Naive thymus-derived CD4-positive, alpha-beta T cell (primary cell): ENCODE measurements at regions of chr14 and their contacts with region 1.

Region 1: GRCh38 chr14:20454516-20455354 is at the starts of genes APEX1 and OSGEP:
- DNase-seq: peak; percentile 86 to 99 (median 98)
- ATAC-seq: peak; percentile 88
- H3K4me3 ChIP-seq: peak within 1 kb of the TSS; percentile 80
- H3K4me3 Mint-ChIP-seq: peak within 1 kb of the TSS in 6 of 10 donors; percentile 7 to 43 (median 30)
- H3K27ac ChIP-seq: peak within 1 kb of the TSS; percentile 85
- H3K27ac Mint-ChIP-seq: no peak within 1 kb of the TSS
- H3K4me1 ChIP-seq: peaks cover 13 to 18% of the 10 kb centered on the region in 2 donors
- H3K4me1 Mint-ChIP-seq: peaks cover 12 to 30% (median 19%) of the 10 kb centered on the region in 7 donors
- H3K27me3 ChIP-seq: no peaks in the 10 kb centered on the region
- H3K27me3 Mint-ChIP-seq: no peaks in the 10 kb centered on the region
- total RNA-seq, gene APEX1: 97.4 to 159 (median 129) TPM
- total RNA-seq, gene OSGEP: 54.2 to 77.2 (median 69.1) TPM

Region 2: DNA sequence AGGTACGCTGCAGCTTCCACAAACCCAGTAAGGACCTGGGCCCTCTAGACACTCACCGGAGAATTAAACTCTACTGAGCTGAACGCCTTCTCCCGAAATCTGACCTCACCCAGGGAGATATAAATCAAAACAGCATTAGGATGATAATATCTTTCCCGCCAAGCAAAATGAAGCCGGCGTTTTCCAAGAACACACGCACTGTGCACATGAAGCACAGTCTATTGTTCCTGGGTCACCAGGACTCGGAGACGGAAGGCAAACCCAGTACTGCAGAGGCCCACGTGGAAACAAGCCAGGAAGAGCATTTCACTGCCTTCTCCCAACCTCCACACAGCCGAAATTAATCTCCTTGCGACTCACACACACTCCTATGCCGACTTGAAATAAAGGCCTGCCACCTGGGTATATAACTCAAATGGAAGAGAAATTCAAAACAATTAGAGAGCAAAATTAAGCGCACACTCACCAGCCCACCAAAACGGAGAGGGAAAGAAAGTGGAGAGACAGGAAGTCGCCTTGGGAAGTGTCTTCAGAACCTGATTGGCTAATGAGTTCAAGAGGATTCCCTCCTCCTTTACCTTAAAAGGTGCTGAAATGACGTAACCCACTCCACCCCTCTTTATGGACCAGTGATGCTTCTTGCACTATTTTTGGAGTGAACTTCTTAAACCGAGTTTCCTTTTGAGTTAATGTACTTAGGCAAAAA is 121.8 kb before region 1 on chr14 and contains the start of gene CCNB1IP1:
- CTCF ChIA-PET with region 1: interaction called, 5 read pairs
- POLR2A ChIA-PET with region 1: interaction called, 3 read pairs
- intact Hi-C with region 1: loop called in 1 of 2 experiments (anchors 2 kb)
- DNase-seq: peak; percentile 11 to 80 (median 64)
- ATAC-seq: peak; percentile 99
- H3K4me3 ChIP-seq: peak within 1 kb of the TSS; percentile 97
- H3K4me3 Mint-ChIP-seq: peak within 1 kb of the TSS; percentile 85 to 100 (median 96)
- H3K27ac ChIP-seq: peak within 1 kb of the TSS; percentile 62
- H3K27ac Mint-ChIP-seq: peak within 1 kb of the TSS; percentile 67 to 96 (median 92)
- H3K4me1 ChIP-seq: no peaks in the 10 kb centered on the region
- H3K4me1 Mint-ChIP-seq: peaks cover 12 to 49% (median 34%) of the 10 kb centered on the region in 7 donors
- H3K27me3 ChIP-seq: no peaks in the 10 kb centered on the region
- H3K27me3 Mint-ChIP-seq: peaks cover 0 to 4% (median 0%) of the 10 kb centered on the region in 5 donors
- total RNA-seq, gene CCNB1IP1: 19.1 to 29.8 (median 28.7) TPM

Region 3: GRCh38 chr14:20356422-20356821 is 98.3 kb before region 1 on chr14:
- CTCF ChIA-PET with region 1: no interaction called
- POLR2A ChIA-PET with region 1: no interaction called
- intact Hi-C with region 1: no loop called
- DNase-seq: no peak
- ATAC-seq: no peak
- H3K4me3 ChIP-seq: no peak overlapping the region
- H3K4me3 Mint-ChIP-seq: no peak overlapping the region
- H3K27ac ChIP-seq: no peak overlapping the region
- H3K27ac Mint-ChIP-seq: peak overlapping the region in 1 of 9 donors; percentile 28
- H3K4me1 ChIP-seq: no peaks in the 10 kb centered on the region
- H3K4me1 Mint-ChIP-seq: peaks cover 0 to 5% (median 0%) of the 10 kb centered on the region in 7 donors
- H3K27me3 ChIP-seq: no peaks in the 10 kb centered on the region
- H3K27me3 Mint-ChIP-seq: no peaks in the 10 kb centered on the region

Region 4: DNA sequence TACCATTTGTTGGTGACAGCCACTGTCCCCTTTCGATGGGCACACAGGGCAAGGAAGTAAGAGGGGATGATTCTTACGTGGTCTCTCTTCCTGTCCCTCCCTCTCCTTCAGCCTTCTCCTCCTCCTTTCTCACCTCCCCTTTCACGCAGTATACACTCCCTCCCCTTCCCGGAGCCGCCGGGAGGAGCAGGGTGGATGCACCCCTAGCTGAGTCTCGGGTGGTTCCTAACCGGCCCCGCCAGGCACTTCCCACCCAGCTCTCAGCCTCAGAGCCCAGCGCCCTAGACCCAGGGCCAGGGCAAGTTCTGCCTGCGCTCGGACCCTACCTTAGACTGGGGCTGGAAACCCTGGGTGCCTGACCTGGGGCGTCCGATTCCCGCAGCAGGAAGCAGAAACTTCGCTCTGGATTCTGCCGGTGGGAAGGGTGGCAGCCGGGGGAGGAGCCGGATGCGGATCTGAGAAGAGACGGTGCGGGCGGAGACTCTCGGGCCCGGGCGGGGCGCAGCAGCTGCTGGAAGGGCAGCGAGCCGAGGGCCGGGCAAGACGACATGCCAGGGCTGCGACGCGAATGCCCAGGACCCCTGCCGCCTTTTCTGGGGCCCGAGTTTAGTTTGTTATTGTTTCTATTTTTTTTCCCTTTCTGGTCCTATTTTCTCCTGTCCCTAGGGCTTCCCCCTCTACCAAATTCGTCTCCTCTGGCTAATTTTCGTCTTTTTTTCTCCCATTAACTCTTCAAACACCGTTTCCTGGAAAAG is 41.5 kb before region 1 on chr14 and contains the start of gene TEP1:
- CTCF ChIA-PET with region 1: interaction called, 6 read pairs
- POLR2A ChIA-PET with region 1: interaction called, 22 read pairs
- intact Hi-C with region 1: loop called (anchors 1 kb)
- DNase-seq: peak; percentile 46 to 75 (median 57)
- ATAC-seq: peak; percentile 80
- H3K4me3 ChIP-seq: peak within 1 kb of the TSS; percentile 71
- H3K4me3 Mint-ChIP-seq: peak within 1 kb of the TSS; percentile 94 to 100 (median 97)
- H3K27ac ChIP-seq: peak within 1 kb of the TSS; percentile 86
- H3K27ac Mint-ChIP-seq: peak within 1 kb of the TSS; percentile 90 to 99 (median 93)
- H3K4me1 ChIP-seq: peaks cover 8 to 17% of the 10 kb centered on the region in 2 donors
- H3K4me1 Mint-ChIP-seq: peaks cover 31 to 59% (median 46%) of the 10 kb centered on the region in 7 donors
- H3K27me3 ChIP-seq: no peaks in the 10 kb centered on the region
- H3K27me3 Mint-ChIP-seq: no peaks in the 10 kb centered on the region
- total RNA-seq, gene TEP1: 23.5 to 56.0 (median 43.6) TPM

Region 5: DNA sequence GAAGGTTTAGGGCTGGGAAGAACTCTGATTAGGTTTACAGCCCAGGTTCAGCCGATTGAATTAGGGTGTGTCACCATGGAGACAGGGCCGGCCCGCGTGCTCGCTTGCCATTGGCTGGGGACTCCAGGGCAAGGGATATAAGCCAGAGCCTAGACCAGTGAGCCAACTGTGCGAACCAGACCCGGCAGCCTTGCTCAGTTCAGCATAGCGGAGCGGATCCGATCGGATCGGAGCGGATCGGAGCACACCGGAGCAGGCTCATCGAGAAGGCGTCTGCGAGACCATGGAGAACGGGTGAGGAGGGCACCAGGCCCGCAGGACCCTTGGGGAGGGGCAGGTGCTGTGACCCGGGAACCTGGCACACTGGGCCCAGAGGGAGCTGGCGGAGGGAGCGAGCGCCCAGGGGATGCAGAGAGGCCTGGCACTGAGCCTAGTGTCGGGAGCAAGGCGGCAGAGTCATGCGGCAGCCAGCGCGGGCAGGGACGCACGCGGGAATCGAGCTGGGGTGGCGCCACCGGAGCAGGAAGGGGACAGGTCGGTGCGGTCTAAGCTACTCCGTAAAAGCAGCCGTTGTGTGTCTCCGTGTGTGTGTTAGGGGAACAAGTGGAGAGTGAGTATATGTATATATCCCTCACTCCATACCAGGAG is 14.6 kb after region 1 on chr14 and contains the start of gene PNP:
- CTCF ChIA-PET with region 1: no interaction called
- POLR2A ChIA-PET with region 1: interaction called, 47 read pairs
- intact Hi-C with region 1: loop called (anchors 1 kb)
- DNase-seq: peak; percentile 74 to 88 (median 84)
- ATAC-seq: peak; percentile 94
- H3K4me3 ChIP-seq: peak within 1 kb of the TSS; percentile 87
- H3K4me3 Mint-ChIP-seq: peak within 1 kb of the TSS; percentile 95 to 100 (median 99)
- H3K27ac ChIP-seq: peak within 1 kb of the TSS; percentile 87
- H3K27ac Mint-ChIP-seq: peak within 1 kb of the TSS; percentile 89 to 98 (median 97)
- H3K4me1 ChIP-seq: peaks cover 13 to 32% of the 10 kb centered on the region in 2 donors
- H3K4me1 Mint-ChIP-seq: peaks cover 40 to 49% (median 43%) of the 10 kb centered on the region in 7 donors
- H3K27me3 ChIP-seq: no peaks in the 10 kb centered on the region
- H3K27me3 Mint-ChIP-seq: peaks cover 0 to 6% (median 0%) of the 10 kb centered on the region in 5 donors
- total RNA-seq, gene PNP: 58.9 to 179 (median 83.0) TPM

Region 6: GRCh38 chr14:20482382-20482781 is 27.6 kb after region 1 on chr14:
- CTCF ChIA-PET with region 1: no interaction called
- POLR2A ChIA-PET with region 1: interaction called, 17 read pairs
- intact Hi-C with region 1: loop called in 1 of 2 experiments (anchors 1 kb)
- DNase-seq: no peak
- ATAC-seq: no peak
- H3K4me3 ChIP-seq: no peak overlapping the region
- H3K4me3 Mint-ChIP-seq: peak overlapping the region in 2 of 10 donors; percentile 20 to 26
- H3K27ac ChIP-seq: no peak overlapping the region
- H3K27ac Mint-ChIP-seq: peak overlapping the region in 8 of 9 donors; percentile 70 to 92 (median 86)
- H3K4me1 ChIP-seq: peaks cover 35 to 36% of the 10 kb centered on the region in 2 donors
- H3K4me1 Mint-ChIP-seq: peaks cover 17 to 94% (median 81%) of the 10 kb centered on the region in 7 donors
- H3K27me3 ChIP-seq: no peaks in the 10 kb centered on the region
- H3K27me3 Mint-ChIP-seq: peaks cover 0 to 8% (median 0%) of the 10 kb centered on the region in 5 donors

Region 7: GRCh38 chr14:20530771-20531571 is 76.2 kb after region 1 on chr14:
- CTCF ChIA-PET with region 1: no interaction called
- POLR2A ChIA-PET with region 1: no interaction called
- intact Hi-C with region 1: loop called in 1 of 2 experiments (anchors 1 kb)
- DNase-seq: peak; percentile 38 to 63 (median 47)
- ATAC-seq: peak; percentile 86
- H3K4me3 ChIP-seq: no peak overlapping the region
- H3K4me3 Mint-ChIP-seq: peak overlapping the region in 6 of 10 donors; percentile 26 to 66 (median 45)
- H3K27ac ChIP-seq: no peak overlapping the region
- H3K27ac Mint-ChIP-seq: peak overlapping the region in 1 of 9 donors; percentile 53
- H3K4me1 ChIP-seq: no peaks in the 10 kb centered on the region
- H3K4me1 Mint-ChIP-seq: peaks cover 2 to 19% (median 12%) of the 10 kb centered on the region in 7 donors
- H3K27me3 ChIP-seq: no peaks in the 10 kb centered on the region
- H3K27me3 Mint-ChIP-seq: peaks cover 0 to 52% (median 8%) of the 10 kb centered on the region in 5 donors